Mammary epithelial cell (primary cell): ENCODE measurements at regions of chr16 and their contacts with region 1.

Region 1: GRCh38 chr16:31333686-31334649 is 21.0 kb upstream of the ITGAX start:
- DNase-seq: peak; percentile 17
- H3K4me3 ChIP-seq: no peak overlapping the region
- H3K27ac ChIP-seq: no peak overlapping the region
- H3K4me1 ChIP-seq: peaks cover 6% of the 10 kb centered on the region
- H3K27me3 ChIP-seq: peaks cover 22% of the 10 kb centered on the region
- CTCF ChIP-seq: peak; percentile 37 to 63

Region 2: DNA sequence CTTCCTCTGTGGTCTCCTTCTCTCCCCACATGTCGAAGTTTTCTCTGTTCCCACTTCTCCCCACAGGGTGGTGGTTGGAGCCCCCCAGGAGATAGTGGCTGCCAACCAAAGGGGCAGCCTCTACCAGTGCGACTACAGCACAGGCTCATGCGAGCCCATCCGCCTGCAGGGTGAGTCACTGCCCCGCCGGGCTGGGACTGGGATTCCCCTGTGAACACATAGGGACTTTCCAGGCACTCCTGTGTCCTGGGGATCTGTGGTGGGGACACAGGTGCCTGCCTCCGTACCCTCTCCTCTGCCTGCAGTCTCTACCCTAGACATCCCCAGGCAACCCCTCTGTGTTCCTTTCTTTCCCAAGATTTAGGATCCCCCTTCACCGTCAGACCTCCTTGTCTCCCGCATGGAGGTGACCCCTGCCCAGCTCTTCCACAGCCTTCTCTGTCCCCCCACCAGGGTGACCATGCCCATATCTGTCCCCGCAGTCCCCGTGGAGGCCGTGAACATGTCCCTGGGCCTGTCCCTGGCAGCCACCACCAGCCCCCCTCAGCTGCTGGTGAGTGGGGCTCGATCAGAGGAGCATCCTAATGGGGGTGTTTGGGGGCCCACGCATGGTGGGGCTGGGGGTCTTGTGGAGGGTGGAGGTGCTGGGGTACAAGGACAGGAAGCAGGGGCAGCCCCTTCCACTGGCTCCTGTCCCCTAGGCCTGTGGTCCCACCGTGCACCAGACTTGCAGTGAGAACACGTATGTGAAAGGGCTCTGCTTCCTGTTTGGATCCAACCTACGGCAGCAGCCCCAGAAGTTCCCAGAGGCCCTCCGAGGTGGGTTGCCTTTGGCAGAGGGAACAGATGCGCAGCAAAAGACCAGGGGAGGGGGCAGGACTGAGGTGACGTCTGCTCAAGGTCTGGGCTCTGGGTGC is 68.4 kb before region 1 on chr16:
- CTCF ChIA-PET with region 1: interaction called, 11 read pairs
- dilution Hi-C with region 1: no loop called
- in situ Hi-C with region 1: no loop called
- intact Hi-C with region 1: no loop called
- DNase-seq: peak; percentile 90
- H3K4me3 ChIP-seq: no peak overlapping the region
- H3K27ac ChIP-seq: peak overlapping the region; percentile 56
- H3K4me1 ChIP-seq: peaks cover 14% of the 10 kb centered on the region
- H3K27me3 ChIP-seq: no peaks in the 10 kb centered on the region
- CTCF ChIP-seq: peak in 1 of 2 donors; percentile 23

Region 3: GRCh38 chr16:31286421-31287032 is 47.4 kb before region 1 on chr16:
- CTCF ChIA-PET with region 1: no interaction called
- dilution Hi-C with region 1: loop called (anchors 5 kb)
- in situ Hi-C with region 1: no loop called
- intact Hi-C with region 1: no loop called
- DNase-seq: no peak
- H3K4me3 ChIP-seq: no peak overlapping the region
- H3K27ac ChIP-seq: no peak overlapping the region
- H3K4me1 ChIP-seq: peaks cover 10% of the 10 kb centered on the region
- H3K27me3 ChIP-seq: no peaks in the 10 kb centered on the region
- CTCF ChIP-seq: no peak

Region 4: DNA sequence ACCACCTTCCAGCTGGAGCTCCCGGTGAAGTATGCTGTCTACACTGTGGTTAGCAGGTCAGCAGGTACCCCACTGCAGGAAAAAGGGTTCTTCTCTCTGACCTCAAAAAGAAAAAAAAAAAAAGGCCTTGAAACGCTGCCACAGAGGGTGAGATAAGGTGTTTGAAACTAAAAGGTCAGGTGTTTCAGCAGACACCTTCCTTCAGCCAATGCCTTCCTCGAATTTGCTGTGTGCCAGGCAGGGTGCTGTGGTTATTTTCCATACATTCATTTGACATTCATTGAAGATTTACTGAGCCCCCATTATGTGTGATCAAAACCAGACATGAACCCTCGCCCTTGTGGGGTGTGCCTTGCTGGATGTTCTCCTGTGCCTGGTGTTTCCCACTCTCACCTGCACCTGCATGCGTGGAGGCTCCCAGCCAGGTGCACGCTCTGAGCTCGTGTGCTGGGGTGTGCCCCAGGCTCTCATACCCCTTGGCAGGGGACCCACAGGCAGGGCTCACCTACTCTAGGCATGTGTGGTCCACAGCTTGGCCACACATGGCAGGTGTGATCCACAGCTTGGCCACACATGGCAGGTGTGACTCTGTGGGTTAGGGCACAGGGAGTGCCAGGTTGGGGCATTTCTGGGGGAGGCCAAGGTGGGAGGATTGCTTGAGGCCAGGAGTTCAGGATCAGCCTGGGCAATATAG is 43.4 kb after region 1 on chr16:
- CTCF ChIA-PET with region 1: no interaction called
- dilution Hi-C with region 1: loop called (anchors 5 kb)
- in situ Hi-C with region 1: no loop called
- intact Hi-C with region 1: no loop called
- DNase-seq: no peak
- H3K4me3 ChIP-seq: no peak overlapping the region
- H3K27ac ChIP-seq: no peak overlapping the region
- H3K4me1 ChIP-seq: no peaks in the 10 kb centered on the region
- H3K27me3 ChIP-seq: no peaks in the 10 kb centered on the region
- CTCF ChIP-seq: no peak

Region 5: GRCh38 chr16:31861455-31861854 is 527.5 kb after region 1 on chr16:
- CTCF ChIA-PET with region 1: no interaction called
- dilution Hi-C with region 1: no loop called
- in situ Hi-C with region 1: no loop called
- intact Hi-C with region 1: no loop called
- DNase-seq: no peak
- H3K4me3 ChIP-seq: no peak overlapping the region
- H3K27ac ChIP-seq: no peak overlapping the region
- H3K4me1 ChIP-seq: no peaks in the 10 kb centered on the region
- H3K27me3 ChIP-seq: peaks cover 3% of the 10 kb centered on the region
- CTCF ChIP-seq: no peak